Caco-2 (cell line): ENCODE measurements at regions of chr3 and their contacts with region 1.

Region 1: GRCh38 chr3:128680602-128681368 is 30.2 kb upstream of the RPN1 start:
- DNase-seq: peak; percentile 99
- H3K4me3 ChIP-seq: peak overlapping the region; percentile 88
- H3K4me3 Mint-ChIP-seq: peak overlapping the region; percentile 86
- H3K27ac Mint-ChIP-seq: peak overlapping the region; percentile 92
- H3K4me1 ChIP-seq: no peaks in the 10 kb centered on the region
- H3K4me1 Mint-ChIP-seq: peaks cover 5% of the 10 kb centered on the region
- H3K27me3 ChIP-seq: no peaks in the 10 kb centered on the region
- H3K27me3 Mint-ChIP-seq: no peaks in the 10 kb centered on the region
- CTCF ChIP-seq: peak; percentile 83 to 96

Region 2: DNA sequence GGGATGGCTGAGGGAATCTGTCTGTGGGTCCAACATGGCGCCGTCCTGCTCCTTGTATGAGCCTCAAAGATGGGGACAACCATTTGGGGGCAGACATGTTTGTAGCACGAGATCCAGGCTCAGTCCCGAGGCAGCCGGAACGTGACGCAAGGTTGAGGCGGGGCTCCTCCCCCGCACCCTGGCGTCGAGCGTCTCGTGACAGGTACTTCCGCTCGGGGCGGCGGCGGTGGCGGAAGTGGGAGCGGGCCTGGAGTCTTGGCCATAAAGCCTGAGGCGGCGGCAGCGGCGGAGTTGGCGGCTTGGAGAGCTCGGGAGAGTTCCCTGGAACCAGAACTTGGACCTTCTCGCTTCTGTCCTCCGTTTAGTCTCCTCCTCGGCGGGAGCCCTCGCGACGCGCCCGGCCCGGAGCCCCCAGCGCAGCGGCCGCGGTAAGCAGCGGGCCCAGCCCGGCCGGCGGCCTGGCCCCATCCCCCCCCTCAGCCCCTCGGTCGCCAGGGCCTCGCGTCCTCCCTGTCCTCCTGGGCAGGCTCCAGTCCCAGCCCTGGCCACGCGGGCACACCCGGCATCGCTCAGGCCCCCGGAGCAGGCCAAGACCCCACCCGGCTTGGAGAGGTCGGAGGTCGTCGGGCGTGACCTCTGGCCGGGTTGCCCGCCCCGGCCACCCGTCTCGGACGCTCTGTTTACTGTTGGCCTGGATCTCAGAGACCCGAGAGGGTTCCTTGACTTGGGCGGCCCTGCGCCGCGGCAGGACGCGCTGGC is 45.3 kb after region 1 on chr3 and contains the start of gene RAB7A:
- CTCF ChIA-PET with region 1: interaction called, 6 read pairs
- POLR2A ChIA-PET with region 1: interaction called, 6 read pairs
- intact Hi-C with region 1: loop called (anchors 1 kb)
- DNase-seq: peak; percentile 98
- H3K4me3 ChIP-seq: peak within 1 kb of the TSS; percentile 86
- H3K4me3 Mint-ChIP-seq: peak within 1 kb of the TSS; percentile 91
- H3K27ac Mint-ChIP-seq: peak within 1 kb of the TSS; percentile 96
- H3K4me1 ChIP-seq: peaks cover 20% of the 10 kb centered on the region
- H3K4me1 Mint-ChIP-seq: peaks cover 13% of the 10 kb centered on the region
- H3K27me3 ChIP-seq: no peaks in the 10 kb centered on the region
- H3K27me3 Mint-ChIP-seq: no peaks in the 10 kb centered on the region
- CTCF ChIP-seq: no peak
- total RNA-seq, gene RAB7A: 262 and 284 TPM in 2 replicates

Region 3: GRCh38 chr3:128787256-128788240 is 106.8 kb after region 1 on chr3:
- CTCF ChIA-PET with region 1: interaction called, 11 read pairs
- POLR2A ChIA-PET with region 1: no interaction called
- intact Hi-C with region 1: loop called (anchors 5 kb)
- DNase-seq: peak in 1 of 2 experiments; percentile 58
- H3K4me3 ChIP-seq: no peak overlapping the region
- H3K4me3 Mint-ChIP-seq: no peak overlapping the region
- H3K27ac Mint-ChIP-seq: no peak overlapping the region
- H3K4me1 ChIP-seq: peaks cover 4% of the 10 kb centered on the region
- H3K4me1 Mint-ChIP-seq: peaks cover 18% of the 10 kb centered on the region
- H3K27me3 ChIP-seq: no peaks in the 10 kb centered on the region
- H3K27me3 Mint-ChIP-seq: no peaks in the 10 kb centered on the region
- CTCF ChIP-seq: peak in 1 of 2 experiments; percentile 35

Region 4: GRCh38 chr3:128849911-128850455 is 169.2 kb after region 1 on chr3:
- CTCF ChIA-PET with region 1: interaction called, 4 read pairs
- POLR2A ChIA-PET with region 1: no interaction called
- intact Hi-C with region 1: loop called (anchors 5 kb)
- DNase-seq: peak in 1 of 2 experiments; percentile 36
- H3K4me3 ChIP-seq: no peak overlapping the region
- H3K4me3 Mint-ChIP-seq: no peak overlapping the region
- H3K27ac Mint-ChIP-seq: no peak overlapping the region
- H3K4me1 ChIP-seq: no peaks in the 10 kb centered on the region
- H3K4me1 Mint-ChIP-seq: no peaks in the 10 kb centered on the region
- H3K27me3 ChIP-seq: no peaks in the 10 kb centered on the region
- H3K27me3 Mint-ChIP-seq: no peaks in the 10 kb centered on the region
- CTCF ChIP-seq: peak; percentile 17 to 22

Region 5: GRCh38 chr3:129068291-129068886 is 387.6 kb after region 1 on chr3:
- CTCF ChIA-PET with region 1: no interaction called
- POLR2A ChIA-PET with region 1: no interaction called
- intact Hi-C with region 1: no loop called
- DNase-seq: no peak
- H3K4me3 ChIP-seq: no peak overlapping the region
- H3K4me3 Mint-ChIP-seq: no peak overlapping the region
- H3K27ac Mint-ChIP-seq: no peak overlapping the region
- H3K4me1 ChIP-seq: no peaks in the 10 kb centered on the region
- H3K4me1 Mint-ChIP-seq: no peaks in the 10 kb centered on the region
- H3K27me3 ChIP-seq: no peaks in the 10 kb centered on the region
- H3K27me3 Mint-ChIP-seq: no peaks in the 10 kb centered on the region
- CTCF ChIP-seq: no peak